K562 (cell line): ENCODE measurements at regions of chr20 and their contacts with region 1.

Region 1: GRCh38 chr20:22339091-22339881 is 245.1 kb downstream of the FOXA2 start:
- DNase-seq: peak; percentile 29 to 77 (median 31)
- ATAC-seq: peak; percentile 87
- H3K4me3 ChIP-seq: no peak overlapping the region
- H3K27ac ChIP-seq: no peak overlapping the region
- H3K4me1 ChIP-seq: no peaks in the 10 kb centered on the region
- H3K27me3 ChIP-seq: no peaks in the 10 kb centered on the region
- CTCF ChIP-seq: peak; percentile 64 to 82 (median 71)
- EP300 ChIP-seq: no peak
- POLR2A ChIP-seq: no peak
- RAD21 ChIP-seq: peak; percentile 93 to 96

Region 2: DNA sequence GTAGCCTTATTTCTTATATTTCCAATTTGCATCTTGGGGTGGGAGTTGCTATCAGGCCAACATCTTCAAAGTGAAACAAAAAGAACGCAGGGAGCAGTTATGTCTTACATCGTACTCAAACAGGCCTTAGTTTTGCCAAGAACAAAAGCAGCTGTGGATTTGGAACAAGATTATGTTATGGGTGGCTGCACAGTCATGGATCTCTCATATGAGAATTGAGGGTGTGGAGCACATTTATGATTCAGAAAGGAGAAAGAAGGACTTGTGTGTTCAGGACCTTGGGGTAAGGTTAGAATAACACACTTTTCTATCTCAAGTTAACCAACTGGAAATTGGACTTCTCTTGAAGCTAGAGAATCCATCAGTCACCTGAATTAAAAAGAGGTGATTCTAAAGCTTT is 14.8 kb before region 1 on chr20:
- CTCF ChIA-PET with region 1: no interaction called
- POLR2A ChIA-PET with region 1: no interaction called
- in situ Hi-C with region 1: no loop called
- intact Hi-C with region 1: no loop called
- DNase-seq: no peak
- ATAC-seq: no peak
- H3K4me3 ChIP-seq: no peak overlapping the region
- H3K27ac ChIP-seq: no peak overlapping the region
- H3K4me1 ChIP-seq: no peaks in the 10 kb centered on the region
- H3K27me3 ChIP-seq: no peaks in the 10 kb centered on the region; a peak in 2 of 5 replicates
- CTCF ChIP-seq: no peak
- EP300 ChIP-seq: no peak
- POLR2A ChIP-seq: no peak
- RAD21 ChIP-seq: no peak

Region 3: DNA sequence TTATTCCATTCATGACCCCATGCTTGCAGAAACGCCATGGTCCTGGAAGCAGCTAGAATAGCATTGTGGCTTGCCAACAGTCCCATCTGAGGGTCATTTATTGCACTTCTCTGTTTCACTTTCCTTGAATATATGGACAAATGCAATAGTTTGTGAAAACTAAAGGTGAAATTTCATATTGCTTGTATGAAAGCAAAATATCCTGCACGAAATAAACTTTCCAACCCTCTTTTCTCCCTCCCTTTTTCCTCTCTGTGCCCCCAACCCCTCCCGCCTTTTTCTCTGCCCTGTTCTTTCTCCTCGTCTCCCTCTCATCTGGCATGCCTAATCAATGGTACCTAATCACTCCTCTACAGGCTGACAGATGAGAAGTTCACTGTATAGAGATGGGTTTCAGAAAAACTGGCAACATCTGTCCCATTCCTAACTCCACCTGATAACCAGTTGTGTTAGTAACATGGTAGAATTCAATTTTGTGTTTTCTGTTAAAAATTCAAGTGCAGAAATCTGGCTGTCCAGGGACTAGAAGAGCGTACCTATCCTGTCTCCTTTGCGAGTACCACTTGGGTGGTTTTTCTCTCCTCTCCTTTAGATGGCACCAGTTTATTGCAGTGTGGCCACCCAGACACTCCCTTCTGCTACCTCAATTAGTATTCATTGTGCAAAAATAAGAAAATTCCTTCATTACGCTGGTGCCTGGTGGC is 46.5 kb after region 1 on chr20:
- CTCF ChIA-PET with region 1: interaction called, 4 read pairs
- POLR2A ChIA-PET with region 1: no interaction called
- in situ Hi-C with region 1: no loop called
- intact Hi-C with region 1: loop called (anchors 2 kb)
- DNase-seq: peak; percentile 10 to 55 (median 30)
- ATAC-seq: peak; percentile 94
- H3K4me3 ChIP-seq: no peak overlapping the region
- H3K27ac ChIP-seq: no peak overlapping the region
- H3K4me1 ChIP-seq: peaks cover 0 to 22% of the 10 kb centered on the region in 2 experiments; a peak in 2 of 5 replicates
- H3K27me3 ChIP-seq: no peaks in the 10 kb centered on the region
- CTCF ChIP-seq: peak; percentile 47 to 72 (median 54)
- EP300 ChIP-seq: no peak
- POLR2A ChIP-seq: no peak
- RAD21 ChIP-seq: peak; percentile 82 to 84